ENCODE measurements at regions of chr1 and their contacts with region 1.

Region 1: DNA sequence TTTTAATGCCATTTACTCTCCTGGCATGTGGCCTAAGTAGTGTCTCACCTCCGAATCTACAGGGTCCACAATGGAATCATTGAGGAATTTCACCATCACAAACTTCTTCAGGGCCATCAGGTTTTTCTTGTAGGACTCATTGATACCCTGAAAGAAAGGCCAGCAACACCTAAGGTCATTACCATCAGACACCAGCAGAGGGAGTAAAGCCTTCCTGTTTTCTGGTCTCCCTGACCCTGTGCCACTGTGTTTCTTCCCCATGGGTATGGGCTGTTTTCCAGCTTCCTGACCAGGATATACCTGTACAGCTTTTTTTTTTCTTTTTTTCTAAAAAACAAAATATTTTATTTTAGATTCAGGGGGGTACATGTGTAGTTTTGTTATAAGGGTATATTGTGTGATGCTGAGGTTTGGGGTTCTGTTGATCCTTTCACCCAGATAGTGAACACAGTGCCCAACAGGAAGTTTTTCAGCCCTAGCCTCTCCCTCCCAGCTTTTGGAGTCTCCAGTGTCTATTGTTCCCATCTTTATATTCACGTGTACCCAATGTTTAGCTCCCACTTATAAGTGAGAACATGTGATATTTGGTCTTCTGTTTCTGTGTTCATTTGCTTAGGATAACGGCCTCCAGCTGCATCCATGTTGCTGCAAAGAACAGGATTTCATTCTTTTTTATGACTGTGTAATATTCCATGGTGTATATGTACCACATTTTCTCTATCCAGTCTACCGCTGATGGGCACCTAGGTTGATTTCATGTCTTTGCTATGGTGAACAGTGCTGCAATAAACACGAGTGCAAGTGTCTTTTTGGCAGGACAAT is 18.3 kb downstream of the PPT1 start:
- DNase-seq: peak in 8 of 9 experiments; percentile 13 to 77 (median 50)
- ATAC-seq: peak; percentile 89
- H3K4me3 ChIP-seq: no peak overlapping the region
- H3K4me3 Mint-ChIP-seq: no peak overlapping the region
- H3K27ac ChIP-seq: no peak overlapping the region
- H3K27ac Mint-ChIP-seq: peak overlapping the region; percentile 56
- H3K4me1 ChIP-seq: peaks cover 4% of the 10 kb centered on the region
- H3K4me1 Mint-ChIP-seq: peaks cover 11% of the 10 kb centered on the region
- H3K27me3 ChIP-seq: no peaks in the 10 kb centered on the region
- H3K27me3 Mint-ChIP-seq: no peaks in the 10 kb centered on the region
- CTCF ChIP-seq: peak; percentile 88

Region 2: GRCh38 chr1:40032240-40032891 is 46.4 kb before region 1 on chr1:
- CTCF ChIA-PET with region 1: interaction called, 43 read pairs
- POLR2A ChIA-PET with region 1: interaction called, 3 read pairs
- intact Hi-C with region 1: no loop called
- DNase-seq: peak; percentile 15 to 77 (median 60)
- ATAC-seq: peak; percentile 67
- H3K4me3 ChIP-seq: no peak overlapping the region
- H3K4me3 Mint-ChIP-seq: no peak overlapping the region
- H3K27ac ChIP-seq: no peak overlapping the region
- H3K27ac Mint-ChIP-seq: peak overlapping the region; percentile 8
- H3K4me1 ChIP-seq: peaks cover 45% of the 10 kb centered on the region
- H3K4me1 Mint-ChIP-seq: peaks cover 49% of the 10 kb centered on the region
- H3K27me3 ChIP-seq: no peaks in the 10 kb centered on the region
- H3K27me3 Mint-ChIP-seq: no peaks in the 10 kb centered on the region
- CTCF ChIP-seq: peak; percentile 47

Region 3: DNA sequence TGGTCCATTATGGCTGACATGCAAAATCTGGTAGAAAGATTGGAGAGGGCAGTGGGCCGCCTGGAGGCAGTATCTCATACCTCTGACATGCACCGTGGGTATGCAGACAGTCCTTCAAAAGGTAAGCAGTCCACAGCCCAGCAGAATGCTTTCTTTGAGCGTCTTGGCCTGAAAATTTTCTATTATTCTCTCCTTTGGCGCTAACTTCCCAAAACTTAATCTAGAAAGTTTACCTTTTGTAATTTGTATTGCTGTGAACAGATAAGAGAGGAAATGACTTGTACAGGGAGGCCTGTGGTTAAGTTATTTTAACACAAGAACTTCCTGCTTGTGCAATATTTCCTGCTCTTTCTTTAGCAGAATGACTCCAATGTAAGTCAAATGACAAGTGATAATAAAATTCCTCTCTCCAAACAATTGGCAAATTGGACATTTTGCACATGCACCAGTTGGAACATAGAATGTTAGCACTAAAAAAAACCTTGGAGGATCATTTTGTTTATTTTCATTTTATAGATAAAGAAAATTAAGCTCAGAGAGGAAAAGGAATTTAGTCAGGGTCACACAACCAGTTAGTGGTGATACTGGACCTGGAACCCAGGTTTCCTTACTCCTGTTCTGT is 19.3 kb before region 1 on chr1:
- CTCF ChIA-PET with region 1: interaction called, 13 read pairs
- POLR2A ChIA-PET with region 1: interaction called, 21 read pairs
- intact Hi-C with region 1: loop called in 1 of 2 experiments (anchors 2 kb)
- DNase-seq: peak in 3 of 9 experiments; percentile 35 to 74 (median 50)
- ATAC-seq: peak; percentile 74
- H3K4me3 ChIP-seq: peak overlapping the region; percentile 18 to 24
- H3K4me3 Mint-ChIP-seq: peak overlapping the region; percentile 79
- H3K27ac ChIP-seq: peak overlapping the region; percentile 36 to 71
- H3K27ac Mint-ChIP-seq: peak overlapping the region; percentile 81
- H3K4me1 ChIP-seq: peaks cover 89% of the 10 kb centered on the region
- H3K4me1 Mint-ChIP-seq: peaks cover 92% of the 10 kb centered on the region
- H3K27me3 ChIP-seq: no peaks in the 10 kb centered on the region
- H3K27me3 Mint-ChIP-seq: no peaks in the 10 kb centered on the region
- CTCF ChIP-seq: no peak

Region 4: GRCh38 chr1:40064797-40065499 is 13.8 kb before region 1 on chr1:
- CTCF ChIA-PET with region 1: interaction called, 13 read pairs
- POLR2A ChIA-PET with region 1: interaction called, 21 read pairs
- intact Hi-C with region 1: loop called in 1 of 2 experiments (anchors 2 kb)
- DNase-seq: peak in 1 of 9 experiments; percentile 42
- ATAC-seq: peak; percentile 53
- H3K4me3 ChIP-seq: no peak overlapping the region
- H3K4me3 Mint-ChIP-seq: peak overlapping the region; percentile 26
- H3K27ac ChIP-seq: peak overlapping the region; percentile 11 to 71
- H3K27ac Mint-ChIP-seq: peak overlapping the region; percentile 87
- H3K4me1 ChIP-seq: peaks cover 52% of the 10 kb centered on the region
- H3K4me1 Mint-ChIP-seq: peaks cover 69% of the 10 kb centered on the region
- H3K27me3 ChIP-seq: no peaks in the 10 kb centered on the region
- H3K27me3 Mint-ChIP-seq: no peaks in the 10 kb centered on the region
- CTCF ChIP-seq: no peak

Region 5: DNA sequence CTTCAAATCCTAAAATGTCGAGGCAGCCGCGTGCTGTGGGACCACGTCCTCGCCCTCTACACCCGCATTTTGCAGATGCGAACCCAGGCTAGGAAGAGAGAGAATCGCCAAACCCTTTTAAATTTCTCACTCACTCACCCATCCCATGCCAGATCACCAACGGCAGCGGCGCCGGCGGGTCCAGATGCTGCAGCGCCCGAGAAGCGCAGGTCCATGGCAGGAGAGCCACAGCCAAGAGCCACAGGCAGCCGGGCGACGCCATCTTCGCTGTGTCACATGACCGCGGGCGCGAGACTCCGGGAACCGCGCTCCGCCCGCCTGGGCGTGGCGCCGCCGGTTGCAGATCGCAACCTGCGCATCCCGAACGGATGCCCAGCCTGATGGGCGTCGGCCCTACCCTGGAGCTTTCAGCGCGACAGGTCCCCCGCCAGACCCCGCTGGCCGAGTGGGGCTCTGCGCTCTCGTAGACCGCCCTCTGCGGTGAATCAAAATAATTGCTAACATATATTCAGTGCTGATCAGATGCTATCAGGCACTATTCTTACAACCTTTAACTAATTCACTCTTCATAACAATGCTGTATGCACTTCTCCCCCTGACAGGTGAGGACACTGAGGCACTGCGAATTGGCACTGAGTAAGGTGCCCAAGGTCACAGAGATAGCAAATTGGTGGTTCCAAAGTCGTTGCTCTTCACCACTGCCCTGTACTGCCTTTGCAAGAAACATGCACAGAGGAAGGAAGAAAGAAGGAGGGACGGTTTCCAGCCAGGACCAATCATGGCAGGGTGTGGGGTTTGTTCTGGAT is 18.5 kb after region 1 on chr1 and contains the start of gene PPT1:
- CTCF ChIA-PET with region 1: interaction called, 25 read pairs
- POLR2A ChIA-PET with region 1: interaction called, 4 read pairs
- intact Hi-C with region 1: no loop called
- DNase-seq: peak; percentile 58 to 90 (median 77)
- ATAC-seq: peak; percentile 83
- H3K4me3 ChIP-seq: peak within 1 kb of the TSS; percentile 55 to 57
- H3K4me3 Mint-ChIP-seq: peak within 1 kb of the TSS; percentile 91
- H3K27ac ChIP-seq: peak within 1 kb of the TSS; percentile 24 to 51
- H3K27ac Mint-ChIP-seq: peak within 1 kb of the TSS; percentile 94
- H3K4me1 ChIP-seq: peaks cover 23% of the 10 kb centered on the region
- H3K4me1 Mint-ChIP-seq: peaks cover 32% of the 10 kb centered on the region
- H3K27me3 ChIP-seq: peaks cover 0 to 4% of the 10 kb centered on the region in 2 experiments
- H3K27me3 Mint-ChIP-seq: no peaks in the 10 kb centered on the region
- CTCF ChIP-seq: peak; percentile 52
- total RNA-seq, gene PPT1: 32.2 to 34.2 TPM

Measured in CD8-positive, alpha-beta T cell (primary cell).